Activated CD4-positive, alpha-beta memory T cell treated with anti-CD3 and anti-CD28 coated beads for 36 hours (primary cell): ENCODE measurements at regions of chr1 and their contacts with region 1.

Region 1: GRCh38 chr1:93814059-93814794 is 64.8 kb downstream of the DNTTIP2 start:
- DNase-seq: peak; percentile 64
- H3K4me3 Mint-ChIP-seq: no peak overlapping the region
- H3K27ac Mint-ChIP-seq: no peak overlapping the region
- H3K4me1 Mint-ChIP-seq: peaks cover 21% of the 10 kb centered on the region
- H3K27me3 Mint-ChIP-seq: no peaks in the 10 kb centered on the region

Region 2: GRCh38 chr1:93437976-93438605 is 376.1 kb before region 1 on chr1:
- CTCF ChIA-PET with region 1: interaction called, 11 read pairs
- POLR2A ChIA-PET with region 1: no interaction called
- intact Hi-C with region 1: loop called (anchors 1 kb)
- DNase-seq: no peak
- H3K4me3 Mint-ChIP-seq: no peak overlapping the region
- H3K27ac Mint-ChIP-seq: no peak overlapping the region
- H3K4me1 Mint-ChIP-seq: no peaks in the 10 kb centered on the region
- H3K27me3 Mint-ChIP-seq: peaks cover 5% of the 10 kb centered on the region

Region 3: DNA sequence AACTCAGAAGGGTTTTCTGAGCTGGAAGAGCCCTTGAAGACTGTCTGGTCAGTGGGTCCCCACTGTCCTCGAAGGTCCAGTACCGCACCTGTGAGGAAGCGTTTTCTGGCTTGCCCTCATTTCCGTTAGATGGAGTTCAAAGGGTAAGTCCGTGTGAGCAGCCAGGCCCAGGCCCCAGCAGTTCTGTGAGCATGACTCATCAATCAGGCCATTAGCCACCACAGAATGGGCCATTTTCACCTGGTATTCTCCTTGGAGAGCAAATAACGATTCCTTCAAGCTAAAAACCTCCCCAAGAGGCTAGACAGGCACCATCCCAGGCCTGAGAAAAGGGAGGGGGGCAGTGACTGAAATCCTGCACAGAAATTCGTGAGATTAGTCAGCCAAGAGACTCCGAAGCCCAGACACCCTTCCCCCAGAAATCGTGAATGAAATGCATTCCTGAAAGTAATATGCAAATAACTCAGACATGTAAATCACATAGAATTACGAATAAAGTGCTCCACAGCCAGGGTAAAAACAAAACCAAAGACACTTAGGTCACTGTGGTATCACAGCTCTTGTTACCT is 198.6 kb before region 1 on chr1:
- CTCF ChIA-PET with region 1: interaction called, 15 read pairs
- POLR2A ChIA-PET with region 1: no interaction called
- intact Hi-C with region 1: no loop called
- DNase-seq: peak; percentile 87
- H3K4me3 Mint-ChIP-seq: peak overlapping the region; percentile 45
- H3K27ac Mint-ChIP-seq: peak overlapping the region; percentile 84
- H3K4me1 Mint-ChIP-seq: peaks cover 26% of the 10 kb centered on the region
- H3K27me3 Mint-ChIP-seq: peaks cover 6% of the 10 kb centered on the region

Region 4: DNA sequence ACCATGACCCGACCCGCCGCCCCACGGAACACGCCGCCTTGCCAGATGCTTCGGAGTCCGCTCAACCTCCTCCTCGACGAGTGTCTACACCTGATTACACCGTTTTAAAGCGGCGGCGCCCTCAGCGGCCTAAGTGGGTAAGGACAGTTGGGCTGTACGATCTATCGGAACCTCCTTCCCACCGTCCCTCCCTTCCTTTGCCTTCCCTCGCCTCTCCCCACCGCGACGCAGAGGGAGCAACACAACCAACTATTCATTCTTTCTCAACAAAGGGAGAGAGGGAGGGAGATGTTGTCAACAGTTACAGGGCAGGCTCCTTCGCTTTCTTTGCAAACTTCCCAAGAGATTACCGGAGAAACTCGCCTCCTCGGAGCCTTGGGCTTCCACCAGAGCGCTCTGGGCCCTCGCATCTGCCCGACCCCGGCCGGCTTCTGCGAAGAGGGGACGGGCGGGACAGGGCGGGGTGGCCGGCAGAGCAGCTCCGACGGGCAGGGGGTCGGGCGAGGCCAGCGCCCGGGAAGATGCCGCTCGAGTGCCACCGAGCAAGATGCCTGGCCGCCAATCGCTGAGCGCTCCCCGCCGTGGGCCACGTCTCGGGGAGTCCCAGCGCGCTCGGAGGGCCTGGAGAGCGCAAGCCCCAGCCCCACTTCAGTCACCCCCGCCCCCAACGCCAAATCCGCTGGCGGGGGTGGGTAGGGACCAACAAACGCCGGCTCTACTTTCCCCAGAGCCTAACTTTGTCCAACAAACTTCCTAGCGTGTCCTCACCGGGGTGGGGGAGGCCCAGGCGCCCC is 133.3 kb before region 1 on chr1:
- CTCF ChIA-PET with region 1: interaction called, 15 read pairs
- POLR2A ChIA-PET with region 1: no interaction called
- intact Hi-C with region 1: no loop called
- DNase-seq: peak; percentile 70
- H3K4me3 Mint-ChIP-seq: peak overlapping the region; percentile 78
- H3K27ac Mint-ChIP-seq: no peak overlapping the region
- H3K4me1 Mint-ChIP-seq: peaks cover 10% of the 10 kb centered on the region
- H3K27me3 Mint-ChIP-seq: peaks cover 48% of the 10 kb centered on the region

Region 5: DNA sequence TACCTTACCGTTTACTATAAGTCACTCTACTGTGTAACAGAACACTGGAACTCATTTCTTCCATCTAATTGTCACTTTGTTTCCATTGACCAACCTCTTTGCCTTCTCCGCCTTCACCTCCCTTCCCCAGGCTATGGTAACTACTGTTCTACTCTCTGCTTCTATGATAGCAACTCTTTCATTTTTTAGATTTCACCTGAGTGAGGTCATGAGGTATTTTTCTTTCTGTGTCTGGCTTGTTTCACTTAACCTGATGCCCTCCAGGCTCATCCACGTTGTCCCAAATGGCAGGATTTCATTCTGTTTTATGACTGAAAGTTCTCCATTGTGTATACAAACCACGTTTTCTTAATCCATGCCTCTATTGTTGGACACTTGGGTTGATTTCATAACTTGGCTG is 130.4 kb after region 1 on chr1:
- CTCF ChIA-PET with region 1: no interaction called
- POLR2A ChIA-PET with region 1: no interaction called
- intact Hi-C with region 1: no loop called
- DNase-seq: no peak
- H3K4me3 Mint-ChIP-seq: no peak overlapping the region
- H3K27ac Mint-ChIP-seq: no peak overlapping the region
- H3K4me1 Mint-ChIP-seq: no peaks in the 10 kb centered on the region
- H3K27me3 Mint-ChIP-seq: peaks cover 6% of the 10 kb centered on the region